BJ (cell line): ENCODE measurements at regions of chr12 and their contacts with region 1.

Region 1: GRCh38 chr12:42023733-42024494 is 120.8 kb downstream of the GXYLT1 start:
- DNase-seq: no peak
- H3K4me3 ChIP-seq: peak overlapping the region; percentile 15; the same call in 1 of the 2 replicates
- H3K27me3 ChIP-seq: no peaks in the 10 kb centered on the region
- CTCF ChIP-seq: peak; percentile 98

Region 2: DNA sequence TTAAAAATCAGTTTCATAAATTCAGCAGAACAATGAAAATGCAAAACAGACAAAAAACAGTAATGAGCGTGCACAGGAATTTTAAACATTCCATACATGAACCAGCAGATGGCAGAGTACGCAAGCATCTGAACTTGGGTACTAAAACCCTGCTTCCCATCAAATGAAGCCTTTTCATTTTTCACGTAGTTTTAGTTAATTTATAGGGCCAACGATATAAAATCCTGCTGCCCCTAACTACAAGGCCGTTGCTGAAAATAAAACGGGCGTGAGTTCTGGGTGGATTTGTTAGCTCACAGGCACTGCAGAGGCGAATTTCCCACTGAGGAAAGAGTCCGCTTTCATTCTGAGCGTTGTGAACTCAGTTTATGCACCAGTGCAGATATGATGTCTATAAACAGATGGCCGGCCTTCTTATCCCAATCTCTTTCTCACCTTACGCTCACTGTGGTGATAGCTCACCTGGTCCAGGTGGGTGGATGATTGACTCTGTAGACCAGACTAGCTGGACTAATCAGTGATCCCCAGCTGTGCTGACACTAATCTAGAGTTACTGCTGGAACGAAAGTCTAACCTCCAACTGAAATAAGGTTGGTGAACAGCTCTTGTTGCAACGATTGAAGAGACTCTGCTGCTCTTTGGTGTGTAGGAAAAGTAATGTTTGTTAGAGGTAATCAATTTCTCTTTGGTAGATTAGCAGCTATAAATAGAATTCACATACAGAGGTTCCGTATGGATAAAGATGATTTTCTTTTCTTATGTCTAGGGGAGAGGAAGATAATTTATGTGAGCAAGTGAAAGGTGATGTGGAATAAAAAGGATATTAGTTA is 746.6 kb before region 1 on chr12:
- CTCF ChIA-PET with region 1: interaction called, 36 read pairs
- POLR2A ChIA-PET with region 1: no interaction called
- DNase-seq: no peak
- H3K4me3 ChIP-seq: no peak overlapping the region
- H3K27me3 ChIP-seq: no peaks in the 10 kb centered on the region
- CTCF ChIP-seq: peak; percentile 67

Region 3: GRCh38 chr12:41548926-41549325 is 475.0 kb before region 1 on chr12:
- CTCF ChIA-PET with region 1: no interaction called
- POLR2A ChIA-PET with region 1: no interaction called
- DNase-seq: no peak
- H3K4me3 ChIP-seq: no peak overlapping the region
- H3K27me3 ChIP-seq: no peaks in the 10 kb centered on the region
- CTCF ChIP-seq: no peak

Region 4: DNA sequence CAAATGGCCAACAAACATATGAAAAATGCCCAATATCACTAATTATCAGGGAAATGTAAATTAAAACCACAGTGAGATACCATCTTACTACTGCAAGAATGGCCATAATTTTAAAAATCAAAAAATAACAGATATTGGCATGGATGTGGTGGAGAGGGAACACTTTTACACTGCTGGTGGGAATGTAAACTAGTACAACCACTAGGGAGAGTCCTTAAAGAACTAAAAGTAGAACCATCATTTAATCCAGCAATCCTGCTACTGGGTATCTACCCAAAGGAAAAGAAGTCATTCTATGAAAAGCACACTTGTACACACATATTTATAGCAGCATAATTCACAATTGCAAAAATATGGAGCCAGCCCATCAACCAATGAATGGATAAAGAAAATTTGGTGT is 338.9 kb before region 1 on chr12:
- CTCF ChIA-PET with region 1: interaction called, 36 read pairs
- POLR2A ChIA-PET with region 1: no interaction called
- DNase-seq: no peak
- H3K4me3 ChIP-seq: no peak overlapping the region
- H3K27me3 ChIP-seq: no peaks in the 10 kb centered on the region
- CTCF ChIP-seq: peak; percentile 53

Region 5: GRCh38 chr12:42008996-42009395 is 14.9 kb before region 1 on chr12:
- CTCF ChIA-PET with region 1: interaction called, 49 read pairs
- POLR2A ChIA-PET with region 1: no interaction called
- DNase-seq: no peak
- H3K4me3 ChIP-seq: no peak overlapping the region
- H3K27me3 ChIP-seq: no peaks in the 10 kb centered on the region
- CTCF ChIP-seq: no peak

Region 6: GRCh38 chr12:42213023-42213422 is 189.1 kb after region 1 on chr12:
- CTCF ChIA-PET with region 1: no interaction called
- POLR2A ChIA-PET with region 1: no interaction called
- DNase-seq: no peak
- H3K4me3 ChIP-seq: no peak overlapping the region
- H3K27me3 ChIP-seq: no peaks in the 10 kb centered on the region
- CTCF ChIP-seq: no peak